ENCODE measurements at regions of chrX and their contacts with region 1.

Region 1: GRCh38 chrX:30568136-30568535 is 9.4 kb downstream of the TASL start:
- DNase-seq: no peak
- H3K4me3 ChIP-seq: no peak overlapping the region
- H3K27ac ChIP-seq: no peak overlapping the region
- H3K4me1 ChIP-seq: no peaks in the 10 kb centered on the region
- H3K27me3 ChIP-seq: no peaks in the 10 kb centered on the region
- CTCF ChIP-seq: no peak
- POLR2A ChIP-seq: no peak

Region 2: DNA sequence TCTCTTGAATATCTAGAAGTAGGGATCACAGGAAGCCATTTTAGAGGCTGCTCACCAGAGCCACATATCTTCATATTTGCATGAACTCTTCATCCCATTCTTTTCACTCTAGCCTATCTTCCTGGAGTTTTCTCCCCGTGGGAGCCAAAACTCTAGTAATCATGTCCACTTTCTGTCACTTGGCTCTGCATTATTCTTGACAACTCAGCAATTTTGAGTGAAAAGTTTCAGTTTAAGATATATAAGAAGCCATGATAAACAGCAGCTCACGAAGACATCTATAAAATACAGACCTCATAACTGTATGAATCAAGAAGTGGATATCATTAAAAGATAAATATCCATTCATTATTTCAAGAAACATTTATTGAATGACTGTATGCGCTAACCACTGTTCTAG is 179.8 kb before region 1 on chrX:
- intact Hi-C with region 1: no loop called
- DNase-seq: no peak
- H3K4me3 ChIP-seq: no peak overlapping the region
- H3K27ac ChIP-seq: no peak overlapping the region
- H3K4me1 ChIP-seq: no peaks in the 10 kb centered on the region
- H3K27me3 ChIP-seq: no peaks in the 10 kb centered on the region
- CTCF ChIP-seq: no peak
- POLR2A ChIP-seq: no peak

Region 3: GRCh38 chrX:30713061-30713525 is 145.0 kb after region 1 on chrX:
- intact Hi-C with region 1: loop called (anchors 5 kb)
- DNase-seq: peak; percentile 41
- H3K4me3 ChIP-seq: no peak overlapping the region
- H3K27ac ChIP-seq: no peak overlapping the region
- H3K4me1 ChIP-seq: no peaks in the 10 kb centered on the region
- H3K27me3 ChIP-seq: no peaks in the 10 kb centered on the region
- CTCF ChIP-seq: peak in 3 of 4 experiments; percentile 16 to 55 (median 38)
- POLR2A ChIP-seq: no peak